ENCODE measurements at regions of chr9 and their contacts with region 1.

Region 1: GRCh38 chr9:18531136-18532065 is 57.4 kb downstream of the ADAMTSL1 start:
- DNase-seq: no peak
- H3K4me3 ChIP-seq: no peak overlapping the region
- H3K27ac ChIP-seq: no peak overlapping the region
- H3K4me1 ChIP-seq: no peaks in the 10 kb centered on the region
- H3K27me3 ChIP-seq: no peaks in the 10 kb centered on the region
- CTCF ChIP-seq: no peak
- POLR2A ChIP-seq: no peak

Region 2: GRCh38 chr9:17986595-17986994 is 544.8 kb before region 1 on chr9:
- CTCF ChIA-PET with region 1: no interaction called
- POLR2A ChIA-PET with region 1: no interaction called
- dilution Hi-C with region 1: no loop called
- intact Hi-C with region 1: loop called (anchors 10 kb)
- DNase-seq: no peak
- H3K4me3 ChIP-seq: no peak overlapping the region
- H3K27ac ChIP-seq: no peak overlapping the region
- H3K4me1 ChIP-seq: no peaks in the 10 kb centered on the region
- H3K27me3 ChIP-seq: no peaks in the 10 kb centered on the region
- CTCF ChIP-seq: no peak
- POLR2A ChIP-seq: no peak

Region 3: GRCh38 chr9:18379073-18379811 is 152.2 kb before region 1 on chr9:
- CTCF ChIA-PET with region 1: no interaction called
- POLR2A ChIA-PET with region 1: no interaction called
- dilution Hi-C with region 1: no loop called
- intact Hi-C with region 1: no loop called
- DNase-seq: peak; percentile 70
- H3K4me3 ChIP-seq: no peak overlapping the region
- H3K27ac ChIP-seq: no peak overlapping the region
- H3K4me1 ChIP-seq: peaks cover 3% of the 10 kb centered on the region
- H3K27me3 ChIP-seq: no peaks in the 10 kb centered on the region
- CTCF ChIP-seq: no peak
- POLR2A ChIP-seq: no peak

Region 4: GRCh38 chr9:18520416-18521047 is 10.9 kb before region 1 on chr9:
- CTCF ChIA-PET with region 1: no interaction called
- POLR2A ChIA-PET with region 1: no interaction called
- dilution Hi-C with region 1: no loop called
- intact Hi-C with region 1: no loop called
- DNase-seq: no peak
- H3K4me3 ChIP-seq: no peak overlapping the region
- H3K27ac ChIP-seq: no peak overlapping the region
- H3K4me1 ChIP-seq: no peaks in the 10 kb centered on the region
- H3K27me3 ChIP-seq: no peaks in the 10 kb centered on the region
- CTCF ChIP-seq: no peak
- POLR2A ChIP-seq: no peak

Region 5: GRCh38 chr9:18626046-18626698 is 94.8 kb after region 1 on chr9:
- CTCF ChIA-PET with region 1: no interaction called
- POLR2A ChIA-PET with region 1: no interaction called
- dilution Hi-C with region 1: no loop called
- intact Hi-C with region 1: no loop called
- DNase-seq: no peak
- H3K4me3 ChIP-seq: no peak overlapping the region
- H3K27ac ChIP-seq: no peak overlapping the region
- H3K4me1 ChIP-seq: peaks cover 14% of the 10 kb centered on the region
- H3K27me3 ChIP-seq: no peaks in the 10 kb centered on the region
- CTCF ChIP-seq: no peak
- POLR2A ChIP-seq: no peak

Region 6: DNA sequence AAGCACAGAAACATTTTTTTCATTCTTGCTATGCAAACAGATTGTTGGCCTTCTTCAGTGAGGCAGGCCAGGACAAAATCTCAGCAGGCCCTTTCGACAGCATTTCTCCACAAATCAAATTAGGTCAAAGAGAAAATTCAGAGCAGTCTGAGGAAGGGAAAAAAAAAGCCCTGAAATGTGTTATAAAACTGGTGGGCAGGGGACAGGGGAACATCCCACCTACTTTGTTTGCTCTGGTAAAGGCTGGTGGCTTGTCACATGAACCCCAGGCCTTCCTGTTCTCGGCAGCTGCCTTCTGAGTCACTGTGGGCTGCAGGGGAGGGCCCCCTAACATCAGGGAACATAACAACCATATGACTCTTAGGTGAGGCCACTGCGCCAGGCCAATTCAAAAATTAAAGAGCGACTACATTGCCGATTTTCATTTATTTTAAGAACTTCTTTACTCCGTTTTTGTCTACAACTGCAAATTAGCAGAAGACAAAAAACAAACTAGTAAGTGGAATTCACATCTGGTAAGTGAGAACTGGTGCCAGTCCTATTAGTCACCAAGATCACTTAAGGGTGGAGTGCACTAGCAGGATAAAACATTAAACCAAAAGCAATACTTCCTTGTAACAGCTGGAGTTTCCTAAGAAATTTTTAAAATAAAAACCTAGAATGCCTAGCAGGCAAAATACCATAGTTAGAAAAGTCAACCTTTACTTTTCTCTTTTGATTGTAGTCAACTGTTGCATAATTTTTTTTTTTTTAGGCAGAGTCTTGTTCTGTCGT is 652.9 kb after region 1 on chr9:
- CTCF ChIA-PET with region 1: no interaction called
- POLR2A ChIA-PET with region 1: no interaction called
- dilution Hi-C with region 1: no loop called
- intact Hi-C with region 1: no loop called
- DNase-seq: peak; percentile 92
- H3K4me3 ChIP-seq: no peak overlapping the region
- H3K27ac ChIP-seq: peak overlapping the region; percentile 96
- H3K4me1 ChIP-seq: peaks cover 32% of the 10 kb centered on the region
- H3K27me3 ChIP-seq: no peaks in the 10 kb centered on the region
- CTCF ChIP-seq: no peak
- POLR2A ChIP-seq: no peak